ENCODE measurements at regions of chr13 and their contacts with region 1.

Region 1: DNA sequence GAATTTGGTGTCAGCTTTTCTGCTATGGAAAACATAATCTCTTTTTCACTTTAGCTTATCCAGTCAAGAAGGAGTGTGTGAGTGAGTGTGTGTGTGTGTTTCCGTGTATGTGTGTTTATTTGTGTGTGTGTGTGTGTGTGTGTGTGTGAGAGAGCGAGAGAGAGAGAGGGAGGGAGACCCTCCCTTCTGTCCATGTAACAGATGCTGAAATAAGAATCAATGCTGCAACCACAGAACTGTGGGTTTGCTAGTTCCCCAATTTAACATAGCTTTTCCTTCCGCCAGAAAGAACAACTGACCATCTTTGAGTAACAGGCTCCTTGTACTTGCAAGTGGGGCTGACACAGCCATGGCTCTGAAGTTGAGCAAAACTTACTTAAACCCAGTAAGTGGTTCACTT is 5.2 kb downstream of the LCP1 start:
- DNase-seq: no peak
- ATAC-seq: peak in 6 of 8 donors; percentile 44 to 73 (median 61)
- H3K4me3 ChIP-seq: peak overlapping the region in 1 of 10 donors; percentile 61
- H3K27ac ChIP-seq: peak overlapping the region in 3 of 10 donors; percentile 23 to 88 (median 44)
- H3K4me1 ChIP-seq: peaks cover 0 to 66% (median 0%) of the 10 kb centered on the region in 9 donors
- H3K27me3 ChIP-seq: peaks cover 0 to 11% (median 0%) of the 10 kb centered on the region in 7 donors
- CTCF ChIP-seq: no peak

Region 2: DNA sequence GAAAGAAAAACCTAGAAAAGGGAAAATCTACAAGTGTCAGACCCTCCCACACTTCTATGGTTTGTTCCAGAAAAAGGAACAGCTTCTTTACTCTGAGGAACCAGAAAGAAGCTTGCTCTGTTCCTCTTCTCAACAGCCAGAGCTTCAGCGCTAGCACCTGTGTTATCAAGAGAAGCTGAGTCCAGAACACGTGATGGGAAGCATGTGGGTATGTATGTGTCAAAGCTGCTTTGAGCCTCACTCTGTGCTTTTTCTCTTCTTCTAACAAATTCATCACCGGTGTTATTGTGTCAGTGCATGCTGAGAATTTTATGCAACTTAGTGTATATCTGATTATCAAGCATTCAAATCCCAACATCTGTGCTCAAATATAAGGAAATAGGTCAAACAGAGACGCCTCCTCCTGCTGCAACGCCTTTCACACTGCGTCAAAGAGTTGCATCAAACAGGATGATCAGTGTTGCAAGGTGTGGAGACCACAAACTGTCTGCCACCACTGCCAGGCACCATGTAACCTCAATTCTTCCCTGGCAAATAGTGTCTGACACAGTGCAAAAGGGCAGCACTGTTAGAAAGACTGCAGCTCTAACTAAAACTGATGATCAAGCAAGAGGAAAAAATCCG is 118.8 kb after region 1 on chr13:
- intact Hi-C with region 1: loop called in 1 of 10 experiments (anchors 10 kb)
- DNase-seq: no peak
- ATAC-seq: peak in 6 of 8 donors; percentile 51 to 80 (median 66)
- H3K4me3 ChIP-seq: peak overlapping the region in 1 of 10 donors; percentile 4
- H3K27ac ChIP-seq: peak overlapping the region in 5 of 10 donors; percentile 12 to 89 (median 32)
- H3K4me1 ChIP-seq: peaks cover 0 to 40% (median 0%) of the 10 kb centered on the region in 9 donors
- H3K27me3 ChIP-seq: no peaks in the 10 kb centered on the region
- CTCF ChIP-seq: no peak